CD4-positive, alpha-beta T cell (primary cell): ENCODE measurements at regions of chr12 and their contacts with region 1.

Region 1: GRCh38 chr12:7678738-7679137 is 13.0 kb upstream of the APOBEC1 start:
- DNase-seq: no peak
- ATAC-seq: no peak
- H3K4me3 ChIP-seq: no peak overlapping the region
- H3K4me3 Mint-ChIP-seq: no peak overlapping the region
- H3K27ac ChIP-seq: no peak overlapping the region
- H3K27ac Mint-ChIP-seq: no peak overlapping the region
- H3K4me1 ChIP-seq: no peaks in the 10 kb centered on the region
- H3K4me1 Mint-ChIP-seq: peaks cover 7% of the 10 kb centered on the region
- H3K27me3 ChIP-seq: peaks cover 0 to 4% of the 10 kb centered on the region in 2 experiments
- H3K27me3 Mint-ChIP-seq: peaks cover 19% of the 10 kb centered on the region
- CTCF ChIP-seq: no peak

Region 2: DNA sequence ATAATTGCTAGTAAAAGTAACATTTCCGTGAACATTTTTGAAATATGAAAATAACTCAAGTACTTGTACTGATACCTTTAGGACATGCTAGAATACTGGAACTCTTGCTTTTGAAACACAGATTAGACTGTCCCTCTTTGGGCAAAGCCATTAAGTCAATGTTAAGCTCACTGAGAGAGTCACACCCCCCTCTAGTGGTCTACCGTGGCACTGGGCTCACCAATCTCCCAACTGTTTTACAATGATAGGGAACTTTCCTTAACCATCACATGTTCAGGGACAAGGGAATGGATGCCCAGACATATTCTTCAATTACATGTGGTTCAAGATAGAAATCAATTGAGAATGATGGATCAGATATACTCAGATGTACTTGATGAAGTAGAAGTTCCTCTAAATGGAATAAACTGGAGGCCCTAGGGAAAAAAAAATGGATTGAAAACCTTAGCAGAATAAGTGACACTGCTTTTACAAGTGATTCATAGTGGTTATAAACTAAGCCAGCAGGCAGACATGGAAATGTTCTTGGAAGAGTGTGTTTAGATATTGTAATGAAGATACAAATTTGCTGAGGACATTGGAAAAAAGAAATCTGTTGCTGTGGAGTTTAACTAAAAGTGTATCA is 128.2 kb after region 1 on chr12:
- CTCF ChIA-PET with region 1: no interaction called
- POLR2A ChIA-PET with region 1: no interaction called
- intact Hi-C with region 1: loop called in 1 of 2 experiments (anchors 1 kb)
- DNase-seq: peak; percentile 15 to 71 (median 42)
- ATAC-seq: peak; percentile 54
- H3K4me3 ChIP-seq: no peak overlapping the region
- H3K4me3 Mint-ChIP-seq: no peak overlapping the region
- H3K27ac ChIP-seq: no peak overlapping the region
- H3K27ac Mint-ChIP-seq: no peak overlapping the region
- H3K4me1 ChIP-seq: no peaks in the 10 kb centered on the region
- H3K4me1 Mint-ChIP-seq: no peaks in the 10 kb centered on the region
- H3K27me3 ChIP-seq: no peaks in the 10 kb centered on the region
- H3K27me3 Mint-ChIP-seq: peaks cover 4% of the 10 kb centered on the region
- CTCF ChIP-seq: peak; percentile 93